H1 (cell line): ENCODE measurements at regions of chr2 and their contacts with region 1.

Region 1: GRCh38 chr2:171319164-171319810 is 114.5 kb downstream of the METTL8 start:
- DNase-seq: peak in 1 of 2 experiments; percentile 38
- H3K4me3 ChIP-seq: peak overlapping the region in 1 of 4 experiments; percentile 35; a peak in 2 of 8 replicates
- H3K27ac ChIP-seq: peak overlapping the region; percentile 74
- H3K4me1 ChIP-seq: peaks cover 22 to 55% (median 41%) of the 10 kb centered on the region in 4 experiments
- H3K27me3 ChIP-seq: no peaks in the 10 kb centered on the region
- CTCF ChIP-seq: no peak
- EP300 ChIP-seq: 0 out of 3 replicates have a peak, but pooled peaks of 1 of the 2 experiments have one; percentile 63
- POLR2A ChIP-seq: no peak; a peak in 1 of 3 replicates
- RAD21 ChIP-seq: no peak

Region 2: DNA sequence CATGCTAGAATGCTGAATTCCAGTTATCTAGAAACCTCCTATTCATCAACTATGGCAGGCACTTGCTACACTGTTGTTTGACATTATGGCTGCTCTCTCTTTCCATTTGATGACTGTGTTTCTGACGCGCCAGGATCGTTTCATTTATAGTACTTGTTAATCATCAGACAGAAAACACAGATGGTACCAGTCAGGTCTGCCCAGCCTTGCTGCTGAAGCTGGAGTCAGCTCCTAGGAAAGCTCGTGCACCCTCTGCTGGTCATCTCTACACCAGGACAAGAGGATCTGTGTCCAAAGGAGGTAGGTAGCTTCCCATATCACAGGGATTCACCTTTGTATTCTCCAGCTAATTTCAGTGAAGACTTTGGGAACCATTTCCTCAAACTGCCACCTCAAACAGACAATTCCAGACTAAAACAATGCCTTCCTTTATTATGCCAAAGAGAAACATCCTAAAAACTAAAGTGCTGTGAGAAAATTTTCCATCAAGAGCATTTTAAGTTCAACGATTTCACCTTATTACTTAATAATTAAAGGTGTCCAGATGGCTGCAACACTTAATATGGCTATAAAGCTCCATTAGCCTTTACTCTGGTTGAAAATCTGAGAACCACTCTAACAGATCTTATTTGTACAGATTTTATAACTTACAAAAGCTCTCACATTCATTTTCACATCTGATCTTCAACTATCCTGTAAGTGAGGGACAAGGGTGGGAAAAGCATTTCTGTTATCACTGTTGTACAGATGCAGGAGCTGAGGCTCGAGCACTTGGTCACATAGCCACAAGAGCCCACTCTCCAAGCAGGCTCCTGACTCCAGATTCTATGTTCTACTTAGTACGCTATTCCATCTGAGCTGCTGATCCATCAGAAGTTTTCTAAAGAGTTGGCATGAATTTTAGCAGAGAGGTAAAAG is 97.0 kb after region 1 on chr2:
- CTCF ChIA-PET with region 1: interaction called, 10 read pairs
- POLR2A ChIA-PET with region 1: interaction called, 4 read pairs
- DNase-seq: peak; percentile 65 to 79
- H3K4me3 ChIP-seq: no peak overlapping the region
- H3K27ac ChIP-seq: no peak overlapping the region
- H3K4me1 ChIP-seq: peaks cover 0 to 9% (median 0%) of the 10 kb centered on the region in 4 experiments; a peak in 2 of 7 replicates
- H3K27me3 ChIP-seq: no peaks in the 10 kb centered on the region
- CTCF ChIP-seq: peak; percentile 75 to 91 (median 82)
- EP300 ChIP-seq: no peak
- POLR2A ChIP-seq: no peak
- RAD21 ChIP-seq: peak; percentile 96